ENCODE measurements at regions of chr10 and their contacts with region 1.

Region 1: GRCh38 chr10:60426400-60426799 is 36.7 kb upstream of the ANK3 start:
- DNase-seq: no peak
- H3K4me3 ChIP-seq: no peak overlapping the region
- H3K27ac ChIP-seq: no peak overlapping the region
- H3K4me1 ChIP-seq: peaks cover 0 to 10% of the 10 kb centered on the region in 2 donors
- H3K27me3 ChIP-seq: no peaks in the 10 kb centered on the region
- CTCF ChIP-seq: no peak

Region 2: DNA sequence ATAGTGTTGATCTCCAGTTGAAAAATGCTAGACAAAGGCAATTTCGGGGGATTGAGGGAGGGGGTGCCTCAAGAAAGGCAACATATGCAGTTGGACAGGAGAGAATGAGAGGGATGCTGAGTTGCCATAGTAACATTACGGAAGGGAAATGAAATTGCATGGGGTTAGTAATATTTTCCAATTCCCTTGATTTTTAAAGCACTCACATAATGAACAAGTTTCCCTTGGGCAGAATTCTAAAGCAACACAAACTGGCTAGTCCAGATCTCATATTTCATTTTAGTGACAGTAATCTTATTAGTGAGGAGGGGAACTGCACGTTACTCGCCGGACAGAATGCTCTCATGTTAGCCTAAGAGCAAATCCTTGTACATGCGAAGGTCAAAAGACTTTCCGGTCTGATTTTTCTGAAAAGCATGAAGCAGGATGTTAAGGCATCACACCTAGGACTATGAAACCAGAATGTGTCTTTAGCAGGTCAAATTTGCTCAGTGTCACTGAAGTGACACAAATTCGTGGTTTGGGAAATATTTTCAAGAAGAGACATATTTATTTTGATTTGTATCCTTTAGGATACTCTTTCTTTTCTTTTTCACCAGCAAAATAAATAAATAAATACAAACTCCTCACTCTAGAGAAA is 202.2 kb before region 1 on chr10:
- intact Hi-C with region 1: loop called (anchors 5 kb)
- DNase-seq: no peak
- H3K4me3 ChIP-seq: no peak overlapping the region
- H3K27ac ChIP-seq: no peak overlapping the region
- H3K4me1 ChIP-seq: no peaks in the 10 kb centered on the region
- H3K27me3 ChIP-seq: no peaks in the 10 kb centered on the region
- CTCF ChIP-seq: no peak

Region 3: DNA sequence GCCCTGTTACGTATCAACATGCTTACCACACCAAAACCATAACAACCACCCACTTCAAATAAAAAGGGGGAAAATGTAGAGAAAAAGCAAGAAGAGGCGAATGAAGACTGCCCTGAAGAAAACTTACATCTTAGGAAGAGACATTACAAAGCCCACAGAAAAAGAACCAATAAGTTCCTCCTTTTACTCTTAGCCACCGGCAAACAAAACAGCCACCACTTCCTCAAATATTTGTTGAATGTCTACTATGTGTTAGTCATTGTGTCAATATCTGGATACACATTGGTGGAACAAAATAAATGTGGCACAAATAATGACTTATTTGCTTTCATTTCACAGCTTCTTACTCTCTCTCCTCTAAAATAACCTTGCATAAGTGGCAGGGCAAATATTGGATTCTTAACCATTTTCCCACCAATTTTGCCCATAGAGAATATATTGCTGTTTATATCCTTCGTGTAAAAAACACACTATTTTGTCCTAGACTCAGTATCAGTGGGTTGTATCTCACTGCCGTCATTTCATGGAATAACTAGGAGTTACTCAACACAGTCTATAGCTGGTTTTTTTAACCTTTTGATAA is 143.5 kb before region 1 on chr10:
- intact Hi-C with region 1: loop called (anchors 5 kb)
- DNase-seq: no peak
- H3K4me3 ChIP-seq: no peak overlapping the region
- H3K27ac ChIP-seq: peak overlapping the region; percentile 2 to 48
- H3K4me1 ChIP-seq: peaks cover 0 to 6% of the 10 kb centered on the region in 2 donors
- H3K27me3 ChIP-seq: no peaks in the 10 kb centered on the region
- CTCF ChIP-seq: no peak